GM12878 (cell line): ENCODE measurements at regions of chr6 and their contacts with region 1.

Region 1: DNA sequence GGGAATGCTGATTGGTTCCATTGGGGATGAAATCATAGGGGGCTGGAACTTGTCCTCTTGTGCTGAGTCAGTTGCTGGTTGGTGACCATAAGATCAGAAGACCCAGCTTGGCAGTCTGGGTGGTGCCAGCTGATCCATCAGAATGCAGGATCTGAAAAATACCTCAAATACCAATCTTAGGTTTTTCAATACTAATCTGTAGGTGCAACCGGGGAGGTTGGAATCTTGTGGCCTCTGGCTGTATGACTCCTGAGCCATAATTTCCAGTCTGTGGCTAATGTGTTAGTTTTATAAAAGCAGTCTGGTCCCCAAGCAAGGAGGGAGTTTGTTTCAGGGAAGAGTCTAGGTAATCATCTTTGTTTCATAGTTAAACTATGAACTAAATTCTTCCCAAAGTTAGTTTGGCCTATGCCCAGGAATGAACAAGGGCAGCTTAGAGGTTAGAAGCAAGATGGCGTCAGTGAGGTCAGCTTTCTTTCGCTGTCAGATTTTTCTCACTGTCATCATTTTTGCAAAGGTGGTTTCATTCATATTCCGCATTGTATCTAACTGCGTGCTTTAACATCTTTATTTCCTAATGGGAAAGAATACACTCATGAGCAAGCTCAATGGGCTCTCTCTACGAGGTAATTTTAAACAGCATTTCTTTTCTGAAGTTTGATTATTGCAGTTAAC is 2.0 kb downstream of the ARMH2 start:
- DNase-seq: no peak
- ATAC-seq: no peak
- H3K4me3 ChIP-seq: no peak overlapping the region
- H3K27ac ChIP-seq: no peak overlapping the region
- H3K4me1 ChIP-seq: no peaks in the 10 kb centered on the region
- H3K27me3 ChIP-seq: no peaks in the 10 kb centered on the region
- CTCF ChIP-seq: no peak
- EP300 ChIP-seq: no peak
- POLR2A ChIP-seq: no peak
- RAD21 ChIP-seq: no peak

Region 2: DNA sequence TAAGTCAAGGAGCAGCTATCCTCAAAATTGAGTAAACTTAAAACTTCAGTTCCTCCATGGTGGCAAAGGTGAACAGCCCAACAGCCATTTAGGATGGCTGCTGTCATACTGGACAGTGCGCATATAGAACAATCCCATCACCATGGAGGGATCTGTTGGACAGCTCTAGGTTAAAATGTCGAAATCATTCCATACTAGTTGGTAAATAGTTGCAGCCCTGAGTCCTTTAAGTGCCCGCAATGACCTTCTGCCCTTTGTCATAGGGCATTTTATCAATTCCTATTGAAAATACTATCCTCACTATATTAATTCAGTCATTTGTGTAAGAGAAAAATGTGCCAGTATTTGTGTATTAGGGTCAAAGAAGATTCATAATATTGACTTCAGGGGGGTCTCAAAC is 10.8 kb after region 1 on chr6:
- CTCF ChIA-PET with region 1: interaction called, 3 read pairs
- POLR2A ChIA-PET with region 1: interaction called, 3 read pairs
- RAD21 ChIA-PET with region 1: no interaction called
- SMC1A ChIA-PET with region 1: interaction called, 20 read pairs
- in situ Hi-C with region 1: no loop called
- intact Hi-C with region 1: no loop called
- DNase-seq: no peak
- ATAC-seq: no peak
- H3K4me3 ChIP-seq: no peak overlapping the region
- H3K27ac ChIP-seq: no peak overlapping the region
- H3K4me1 ChIP-seq: no peaks in the 10 kb centered on the region
- H3K27me3 ChIP-seq: no peaks in the 10 kb centered on the region
- CTCF ChIP-seq: no peak
- EP300 ChIP-seq: no peak
- POLR2A ChIP-seq: no peak
- RAD21 ChIP-seq: no peak

Region 3: DNA sequence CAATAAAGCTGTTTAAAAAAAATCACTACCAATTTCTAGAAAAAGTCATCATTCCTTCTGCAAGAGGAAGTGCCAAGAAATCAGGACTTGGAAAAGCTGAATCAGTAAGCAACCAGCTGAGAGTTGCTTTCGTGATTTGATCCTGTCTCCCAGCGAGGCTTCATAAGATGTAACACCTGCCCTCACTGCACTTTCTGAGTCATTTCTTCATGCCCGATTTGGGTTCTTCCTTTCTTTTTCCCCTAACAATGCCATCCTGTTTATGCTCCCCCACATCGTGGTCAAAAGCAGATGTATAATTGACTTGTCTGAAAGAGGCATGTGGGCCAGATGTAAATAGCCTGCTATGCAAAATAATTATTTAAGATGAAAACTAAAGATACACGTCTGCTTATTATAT is 86.9 kb after region 1 on chr6:
- CTCF ChIA-PET with region 1: no interaction called
- POLR2A ChIA-PET with region 1: no interaction called
- RAD21 ChIA-PET with region 1: no interaction called
- SMC1A ChIA-PET with region 1: no interaction called
- in situ Hi-C with region 1: no loop called
- intact Hi-C with region 1: no loop called
- DNase-seq: peak; percentile 84
- ATAC-seq: peak; percentile 90
- H3K4me3 ChIP-seq: no peak overlapping the region
- H3K27ac ChIP-seq: peak overlapping the region; percentile 60; the same call in 1 of the 2 replicates
- H3K4me1 ChIP-seq: peaks cover 33% of the 10 kb centered on the region
- H3K27me3 ChIP-seq: no peaks in the 10 kb centered on the region
- CTCF ChIP-seq: no peak
- EP300 ChIP-seq: peak; percentile 54 to 74; a peak in 3 of 4 replicates
- POLR2A ChIP-seq: no peak
- RAD21 ChIP-seq: no peak

Region 4: DNA sequence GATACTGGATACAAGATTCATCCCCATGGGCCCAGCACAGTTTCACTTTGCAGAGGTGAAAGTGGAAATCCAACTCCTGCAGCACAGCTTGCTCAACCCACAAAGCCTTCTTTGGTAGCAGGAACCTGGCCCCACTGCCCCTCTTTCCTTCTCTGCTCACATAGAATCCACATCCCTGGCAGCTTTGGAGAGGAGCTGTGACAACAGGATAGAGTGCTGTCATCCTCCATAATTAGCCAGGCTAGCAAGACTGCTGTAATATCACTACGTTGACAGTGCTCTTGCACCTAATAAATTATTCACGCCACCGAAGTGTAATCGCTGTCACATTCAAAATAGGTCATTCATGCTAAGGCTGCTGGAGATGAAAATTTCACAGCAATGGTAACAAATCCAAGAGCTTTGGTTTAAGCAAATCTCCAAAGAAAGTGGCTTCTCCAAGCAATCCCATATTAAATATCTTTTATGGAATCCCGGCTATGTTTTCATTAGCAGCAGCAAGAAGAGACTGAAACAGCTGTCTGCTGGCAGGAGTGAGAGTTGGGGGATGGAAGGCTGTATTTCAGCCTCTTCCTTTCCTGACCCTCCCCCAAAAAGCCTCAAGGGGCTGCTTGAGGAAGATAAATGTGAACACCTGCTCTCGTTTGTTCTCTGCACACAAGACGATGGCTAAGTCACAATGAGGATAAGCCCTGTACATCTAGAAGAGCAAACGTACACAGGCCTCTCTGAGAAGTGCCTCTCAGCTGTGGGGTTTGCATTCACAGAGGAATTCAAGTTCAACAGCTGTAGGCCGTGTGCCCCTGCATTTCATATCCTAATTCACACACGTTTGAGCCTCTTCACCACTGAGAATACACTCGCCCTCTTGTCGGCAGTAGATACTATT is 122.5 kb after region 1 on chr6:
- CTCF ChIA-PET with region 1: no interaction called
- POLR2A ChIA-PET with region 1: no interaction called
- RAD21 ChIA-PET with region 1: no interaction called
- SMC1A ChIA-PET with region 1: no interaction called
- in situ Hi-C with region 1: no loop called
- intact Hi-C with region 1: no loop called
- DNase-seq: no peak
- ATAC-seq: peak; percentile 75
- H3K4me3 ChIP-seq: peak overlapping the region; percentile 13; the same call in 1 of the 2 replicates
- H3K27ac ChIP-seq: peak overlapping the region; percentile 1
- H3K4me1 ChIP-seq: peaks cover 28% of the 10 kb centered on the region
- H3K27me3 ChIP-seq: no peaks in the 10 kb centered on the region
- CTCF ChIP-seq: no peak
- EP300 ChIP-seq: no peak
- POLR2A ChIP-seq: no peak
- RAD21 ChIP-seq: no peak

Region 5: DNA sequence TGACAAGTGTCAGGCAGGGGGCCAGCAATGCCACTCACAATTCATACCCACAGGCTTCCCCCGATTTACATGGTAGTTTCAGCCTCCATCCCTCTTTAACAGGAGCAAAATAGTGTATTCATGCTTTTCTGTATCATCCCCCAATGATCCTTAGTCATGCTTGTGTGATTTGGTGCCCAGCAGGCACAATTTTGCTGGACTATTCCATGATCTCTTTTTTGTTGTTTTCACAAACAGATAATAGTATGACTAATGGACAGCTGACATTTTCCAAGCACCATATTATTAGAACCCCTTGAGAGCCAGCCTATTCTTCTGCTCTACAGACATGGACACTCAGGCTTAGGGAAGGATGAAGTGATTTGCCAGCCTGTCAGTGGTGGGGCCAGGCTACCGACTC is 267.3 kb after region 1 on chr6:
- CTCF ChIA-PET with region 1: no interaction called
- POLR2A ChIA-PET with region 1: no interaction called
- RAD21 ChIA-PET with region 1: no interaction called
- SMC1A ChIA-PET with region 1: no interaction called
- in situ Hi-C with region 1: no loop called
- intact Hi-C with region 1: no loop called
- DNase-seq: no peak
- ATAC-seq: no peak
- H3K4me3 ChIP-seq: no peak overlapping the region
- H3K27ac ChIP-seq: no peak overlapping the region
- H3K4me1 ChIP-seq: no peaks in the 10 kb centered on the region
- H3K27me3 ChIP-seq: no peaks in the 10 kb centered on the region
- CTCF ChIP-seq: no peak
- EP300 ChIP-seq: no peak
- POLR2A ChIP-seq: no peak
- RAD21 ChIP-seq: no peak